Right cardiac atrium (tissue), 5 donors: ENCODE measurements at regions of chr14 and their contacts with region 1.

Region 1: DNA sequence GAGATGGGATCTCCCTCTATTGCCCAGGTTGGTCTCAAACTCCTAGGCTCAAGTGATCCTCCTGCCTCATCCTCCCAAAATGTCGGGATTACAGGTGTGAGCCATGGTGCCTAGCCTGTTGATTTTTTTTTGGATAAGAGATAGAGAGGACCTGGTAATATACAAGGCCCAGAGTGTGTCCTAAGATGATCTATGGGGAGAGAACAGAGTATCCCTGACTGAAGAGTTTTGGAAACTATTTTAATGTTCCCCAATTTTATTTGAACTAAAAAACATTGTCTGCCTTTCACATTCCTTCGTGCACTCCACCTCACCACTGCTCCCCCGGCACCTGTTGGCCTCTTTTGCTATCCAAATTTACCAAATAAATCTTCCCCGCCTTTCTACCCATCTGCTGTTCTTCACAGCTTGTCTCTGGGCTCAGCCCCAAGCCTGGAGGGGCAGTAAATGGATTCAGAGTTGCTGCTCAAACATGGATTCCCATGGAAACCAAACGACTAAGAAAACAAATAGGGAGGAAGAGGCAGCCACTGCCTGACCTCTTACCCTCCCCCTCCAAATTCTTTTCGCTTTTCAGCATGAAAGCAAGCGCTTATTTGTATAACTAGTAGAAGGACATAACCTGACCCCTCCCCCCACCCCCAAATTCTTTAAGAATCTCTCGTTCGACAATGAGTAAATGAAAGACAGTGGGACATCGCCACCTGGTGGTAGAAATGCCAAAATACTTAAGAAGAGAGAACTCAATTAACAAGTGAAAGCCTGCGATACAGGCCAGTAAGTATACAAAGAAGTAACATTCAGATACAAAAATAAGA is 22.6 kb downstream of the OR10G3 start:
- DNase-seq: peak; percentile 61 to 87 (median 81)
- ATAC-seq: peak; percentile 86 to 88
- H3K4me3 ChIP-seq: peak overlapping the region; percentile 67
- H3K27ac ChIP-seq: peak overlapping the region; percentile 13
- H3K4me1 ChIP-seq: no peaks in the 10 kb centered on the region
- H3K27me3 ChIP-seq: no peaks in the 10 kb centered on the region

Region 2: GRCh38 chr14:21455911-21456667 is 101.2 kb before region 1 on chr14 and contains the start of gene CHD8:
- intact Hi-C with region 1: loop called in 1 of 4 experiments (anchors 10 kb)
- DNase-seq: peak; percentile 100
- ATAC-seq: peak; percentile 100
- H3K4me3 ChIP-seq: peak within 1 kb of the TSS; percentile 86
- H3K27ac ChIP-seq: peak within 1 kb of the TSS; percentile 100
- H3K4me1 ChIP-seq: peaks cover 7% of the 10 kb centered on the region
- H3K27me3 ChIP-seq: no peaks in the 10 kb centered on the region
- total RNA-seq, gene CHD8: 34.8 to 40.6 (median 39.7) TPM

Region 3: DNA sequence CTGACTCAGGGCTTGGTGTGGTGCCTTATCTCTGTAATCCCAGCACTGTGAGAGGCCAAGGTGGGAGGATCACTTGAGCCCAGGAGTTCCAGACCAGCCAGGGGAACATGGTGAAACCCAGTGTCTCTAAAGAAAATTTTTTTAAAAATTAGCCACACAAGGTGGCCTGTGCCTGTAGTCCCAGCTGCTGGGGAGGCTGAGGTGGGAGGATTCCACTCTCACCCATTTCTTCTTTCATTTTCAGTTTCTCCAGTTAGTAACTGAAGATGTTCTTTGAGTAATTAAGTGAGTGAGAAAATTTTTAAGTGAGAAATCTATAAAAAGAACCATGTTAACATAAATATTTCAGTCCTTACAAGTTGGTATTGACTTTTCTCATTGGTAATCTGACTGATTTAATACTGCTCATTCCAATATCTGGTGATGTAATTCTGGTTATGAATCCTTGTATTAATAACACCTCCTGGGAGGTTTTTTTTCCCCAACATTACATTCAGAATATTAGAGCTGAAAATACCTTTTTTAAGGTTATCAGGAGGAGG is 52.2 kb before region 1 on chr14:
- intact Hi-C with region 1: loop called in 1 of 4 experiments (anchors 10 kb)
- DNase-seq: no peak
- ATAC-seq: no peak
- H3K4me3 ChIP-seq: no peak overlapping the region
- H3K27ac ChIP-seq: no peak overlapping the region
- H3K4me1 ChIP-seq: no peaks in the 10 kb centered on the region
- H3K27me3 ChIP-seq: no peaks in the 10 kb centered on the region